B cell (primary cell): ENCODE measurements at regions of chr20 and their contacts with region 1.

Region 1: DNA sequence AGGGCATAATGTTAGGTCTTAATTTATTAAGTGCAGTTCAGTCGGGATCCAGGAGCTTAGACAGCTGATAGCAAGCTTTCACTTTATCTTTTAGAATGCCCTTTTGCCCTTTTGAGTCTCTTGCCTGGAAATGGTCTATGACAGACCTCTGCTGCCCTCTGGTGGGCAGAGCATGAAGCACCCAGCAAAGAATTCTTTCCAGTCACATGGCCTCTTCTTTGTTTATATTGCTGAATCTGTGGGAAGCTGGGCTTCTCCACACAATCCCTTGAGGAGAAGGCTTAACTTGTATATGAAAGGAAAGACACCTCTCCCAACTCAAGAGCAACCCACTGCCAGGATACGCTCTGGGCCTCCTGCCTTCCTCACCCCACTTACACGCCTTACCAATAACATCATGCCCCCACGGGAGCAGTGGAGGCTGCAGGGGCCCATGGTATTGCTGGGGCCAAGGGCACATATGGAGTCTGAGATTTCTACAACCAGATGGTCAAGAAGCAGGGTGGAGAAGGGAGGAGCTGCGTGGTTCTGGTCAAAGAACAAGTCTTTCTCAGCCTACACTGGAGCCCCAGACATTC is 20.4 kb downstream of the WFDC3 start:
- DNase-seq: peak; percentile 86
- ATAC-seq: peak; percentile 73
- H3K4me3 ChIP-seq: no peak overlapping the region
- H3K4me3 Mint-ChIP-seq: no peak overlapping the region
- H3K27ac ChIP-seq: no peak overlapping the region
- H3K27ac Mint-ChIP-seq: no peak overlapping the region
- H3K4me1 ChIP-seq: peaks cover 0 to 6% of the 10 kb centered on the region in 2 donors
- H3K4me1 Mint-ChIP-seq: peaks cover 5% of the 10 kb centered on the region
- H3K27me3 ChIP-seq: peaks cover 0 to 6% (median 1%) of the 10 kb centered on the region in 4 experiments
- H3K27me3 Mint-ChIP-seq: peaks cover 18% of the 10 kb centered on the region
- CTCF ChIP-seq: peak; percentile 95

Region 2: GRCh38 chr20:45293041-45294002 is 477.9 kb before region 1 on chr20:
- CTCF ChIA-PET with region 1: interaction called, 35 read pairs
- POLR2A ChIA-PET with region 1: no interaction called
- intact Hi-C with region 1: no loop called
- DNase-seq: peak; percentile 85
- ATAC-seq: peak; percentile 86
- H3K4me3 ChIP-seq: peak overlapping the region in 4 of 5 experiments; percentile 39 to 65 (median 60)
- H3K4me3 Mint-ChIP-seq: peak overlapping the region; percentile 87
- H3K27ac ChIP-seq: no peak overlapping the region
- H3K27ac Mint-ChIP-seq: no peak overlapping the region
- H3K4me1 ChIP-seq: peaks cover 13 to 21% of the 10 kb centered on the region in 2 donors
- H3K4me1 Mint-ChIP-seq: peaks cover 18% of the 10 kb centered on the region
- H3K27me3 ChIP-seq: peaks cover 0 to 42% (median 20%) of the 10 kb centered on the region in 4 experiments
- H3K27me3 Mint-ChIP-seq: peaks cover 41% of the 10 kb centered on the region
- CTCF ChIP-seq: peak; percentile 96

Region 3: GRCh38 chr20:45322952-45323383 is 448.3 kb before region 1 on chr20:
- CTCF ChIA-PET with region 1: interaction called, 135 read pairs
- POLR2A ChIA-PET with region 1: no interaction called
- intact Hi-C with region 1: loop called (anchors 1 kb)
- DNase-seq: peak; percentile 70
- ATAC-seq: peak; percentile 23
- H3K4me3 ChIP-seq: no peak overlapping the region
- H3K4me3 Mint-ChIP-seq: no peak overlapping the region
- H3K27ac ChIP-seq: no peak overlapping the region
- H3K27ac Mint-ChIP-seq: peak overlapping the region; percentile 15
- H3K4me1 ChIP-seq: peaks cover 28 to 41% of the 10 kb centered on the region in 2 donors
- H3K4me1 Mint-ChIP-seq: peaks cover 23% of the 10 kb centered on the region
- H3K27me3 ChIP-seq: peaks cover 0 to 3% (median 0%) of the 10 kb centered on the region in 4 experiments
- H3K27me3 Mint-ChIP-seq: no peaks in the 10 kb centered on the region
- CTCF ChIP-seq: no peak

Region 4: DNA sequence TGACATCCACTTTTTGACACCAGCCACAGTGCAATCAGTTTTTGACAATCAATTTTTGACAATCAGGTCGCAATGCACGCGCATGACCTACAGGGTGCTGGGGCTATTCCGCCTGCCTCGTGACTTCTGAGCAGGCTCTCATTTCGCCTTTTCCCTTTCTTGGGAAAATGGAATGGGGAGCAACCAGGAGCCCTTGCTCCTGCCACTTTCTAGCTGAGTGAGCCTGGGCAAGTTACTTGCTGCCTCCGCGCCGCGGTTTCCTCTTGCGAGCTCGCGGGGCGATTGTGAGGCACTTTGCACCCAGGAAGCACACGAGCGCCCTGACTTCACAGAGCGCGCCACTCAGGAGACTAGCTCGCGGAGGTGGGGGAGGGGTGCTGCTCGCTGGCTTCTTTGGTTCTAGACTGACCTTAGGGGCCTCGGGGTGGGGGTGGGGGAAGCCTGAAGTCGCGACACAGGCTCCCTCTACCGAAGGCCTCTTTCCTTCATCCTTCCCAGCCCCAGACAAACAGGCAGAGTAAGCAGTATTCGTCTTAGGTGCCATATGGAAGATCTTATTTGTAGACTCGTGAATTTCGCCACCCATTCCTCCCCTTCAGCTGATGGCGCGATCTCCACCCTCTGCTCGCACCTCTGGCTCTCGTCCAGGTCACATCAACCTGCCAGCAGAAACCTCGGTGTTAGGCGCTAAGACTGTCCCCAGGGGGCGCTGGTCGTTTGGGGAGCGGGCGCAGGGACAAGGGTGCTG is 397.7 kb before region 1 on chr20:
- CTCF ChIA-PET with region 1: interaction called, 30 read pairs
- POLR2A ChIA-PET with region 1: no interaction called
- intact Hi-C with region 1: no loop called
- DNase-seq: peak; percentile 88
- ATAC-seq: peak; percentile 92
- H3K4me3 ChIP-seq: peak overlapping the region; percentile 42 to 64 (median 54)
- H3K4me3 Mint-ChIP-seq: peak overlapping the region; percentile 96
- H3K27ac ChIP-seq: peak overlapping the region in 1 of 2 donors; percentile 73
- H3K27ac Mint-ChIP-seq: peak overlapping the region; percentile 86
- H3K4me1 ChIP-seq: peaks cover 48 to 57% of the 10 kb centered on the region in 2 donors
- H3K4me1 Mint-ChIP-seq: peaks cover 56% of the 10 kb centered on the region
- H3K27me3 ChIP-seq: no peaks in the 10 kb centered on the region
- H3K27me3 Mint-ChIP-seq: no peaks in the 10 kb centered on the region
- CTCF ChIP-seq: peak; percentile 90

Region 5: DNA sequence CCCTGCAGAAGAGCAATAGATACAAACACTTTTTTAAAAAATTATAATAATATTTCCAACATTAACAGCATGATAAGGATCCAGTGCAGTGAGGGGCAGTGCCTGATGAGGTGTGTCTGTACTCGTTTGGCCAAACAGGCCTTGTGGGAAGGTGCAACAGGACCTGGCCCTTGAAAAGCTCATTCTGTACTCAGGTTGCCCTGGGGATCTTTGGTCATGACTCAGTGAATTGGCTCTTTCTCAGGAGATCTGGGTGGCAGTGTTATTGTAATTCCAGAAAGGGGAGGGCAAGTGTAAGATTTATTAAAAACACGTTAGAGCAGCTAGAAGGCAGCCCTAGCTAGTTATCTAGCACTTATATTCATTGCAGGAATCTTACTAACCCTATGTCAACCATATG is 253.0 kb before region 1 on chr20:
- CTCF ChIA-PET with region 1: no interaction called
- POLR2A ChIA-PET with region 1: no interaction called
- intact Hi-C with region 1: no loop called
- DNase-seq: no peak
- ATAC-seq: no peak
- H3K4me3 ChIP-seq: no peak overlapping the region
- H3K4me3 Mint-ChIP-seq: no peak overlapping the region
- H3K27ac ChIP-seq: no peak overlapping the region
- H3K27ac Mint-ChIP-seq: no peak overlapping the region
- H3K4me1 ChIP-seq: no peaks in the 10 kb centered on the region
- H3K4me1 Mint-ChIP-seq: no peaks in the 10 kb centered on the region
- H3K27me3 ChIP-seq: peaks cover 0 to 13% (median 5%) of the 10 kb centered on the region in 4 experiments
- H3K27me3 Mint-ChIP-seq: peaks cover 43% of the 10 kb centered on the region
- CTCF ChIP-seq: no peak

Region 6: DNA sequence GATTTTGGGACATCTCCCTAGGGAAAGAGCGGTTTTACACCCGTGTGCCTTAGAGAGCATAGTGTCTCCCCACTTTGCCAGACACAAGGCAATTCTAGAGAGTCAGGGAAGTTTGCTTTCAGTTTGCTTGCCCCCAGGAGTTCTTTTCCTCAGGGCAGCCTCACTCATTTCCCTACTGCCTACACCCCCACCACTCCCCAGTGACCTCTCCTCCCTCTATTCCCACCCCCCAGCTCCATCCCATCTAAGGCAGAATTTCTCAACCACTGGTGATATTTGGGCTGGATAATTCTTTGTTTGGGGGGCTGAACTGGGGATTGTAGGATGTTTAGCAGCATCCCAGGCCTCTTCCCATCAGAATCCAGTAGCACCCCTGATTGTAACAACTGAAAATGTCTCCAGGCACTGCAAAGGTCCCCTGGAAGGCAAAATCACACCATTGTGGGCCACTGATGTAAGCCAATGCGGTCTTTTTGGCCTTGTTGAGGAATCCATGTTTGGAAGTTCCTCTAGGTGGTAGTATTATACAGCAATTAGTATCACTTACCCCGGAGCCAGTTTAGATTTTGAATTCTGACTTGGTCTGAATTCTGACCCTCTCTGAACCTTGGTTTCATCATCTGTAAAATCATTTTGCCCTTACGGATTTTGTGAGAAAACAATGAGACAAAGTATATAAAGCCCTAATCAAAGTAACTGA is 225.4 kb before region 1 on chr20:
- CTCF ChIA-PET with region 1: no interaction called
- POLR2A ChIA-PET with region 1: no interaction called
- intact Hi-C with region 1: loop called (anchors 2 kb)
- DNase-seq: no peak
- ATAC-seq: no peak
- H3K4me3 ChIP-seq: no peak overlapping the region
- H3K4me3 Mint-ChIP-seq: no peak overlapping the region
- H3K27ac ChIP-seq: no peak overlapping the region
- H3K27ac Mint-ChIP-seq: no peak overlapping the region
- H3K4me1 ChIP-seq: no peaks in the 10 kb centered on the region
- H3K4me1 Mint-ChIP-seq: no peaks in the 10 kb centered on the region
- H3K27me3 ChIP-seq: peaks cover 0 to 5% (median 3%) of the 10 kb centered on the region in 4 experiments
- H3K27me3 Mint-ChIP-seq: peaks cover 74% of the 10 kb centered on the region
- CTCF ChIP-seq: no peak